ENCODE measurements at regions of chr17 and their contacts with region 1.

Region 1: DNA sequence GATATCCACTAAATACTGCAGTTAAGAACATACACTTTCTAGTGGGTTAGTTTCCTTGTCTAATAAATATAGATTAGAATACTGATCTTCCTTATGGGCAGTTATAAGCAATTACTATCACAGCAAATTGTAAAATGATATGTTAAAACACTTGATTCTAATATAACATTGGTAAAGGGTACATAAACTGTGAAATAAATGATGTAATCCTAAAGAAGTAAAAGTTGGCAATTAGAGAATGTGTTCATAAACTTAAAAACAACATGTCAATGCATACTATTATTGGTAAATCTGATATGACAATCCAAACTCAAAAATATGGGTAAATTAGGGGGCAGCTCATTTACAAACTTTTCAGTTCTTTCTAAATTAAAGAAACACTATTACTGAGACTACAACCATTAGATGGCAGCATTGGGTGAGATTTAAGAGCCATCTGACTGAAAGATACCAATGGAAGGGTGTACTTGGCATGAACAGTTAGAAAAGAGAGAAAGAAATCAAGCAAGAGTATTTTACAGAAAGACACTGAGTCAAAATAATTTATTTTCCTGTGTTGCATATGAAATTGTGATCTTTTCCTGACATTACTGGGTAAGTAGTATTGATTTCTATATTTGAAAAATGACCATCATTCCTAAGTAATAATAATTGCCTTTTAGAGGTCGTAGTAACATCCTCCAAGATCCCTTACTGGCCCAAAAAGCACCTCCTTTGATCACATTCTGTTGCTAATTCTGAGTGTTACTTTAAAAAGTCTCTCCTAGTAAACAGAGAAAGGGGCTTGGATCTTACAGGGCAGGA is 119.6 kb downstream of the SPAG9 start:
- DNase-seq: peak; percentile 27
- H3K4me3 Mint-ChIP-seq: no peak overlapping the region
- H3K27ac Mint-ChIP-seq: no peak overlapping the region
- H3K4me1 Mint-ChIP-seq: no peaks in the 10 kb centered on the region
- H3K27me3 Mint-ChIP-seq: no peaks in the 10 kb centered on the region

Region 2: GRCh38 chr17:51015145-51015558 is 14.1 kb after region 1 on chr17:
- CTCF ChIA-PET with region 1: interaction called, 11 read pairs
- DNase-seq: no peak
- H3K4me3 Mint-ChIP-seq: no peak overlapping the region
- H3K27ac Mint-ChIP-seq: no peak overlapping the region
- H3K4me1 Mint-ChIP-seq: no peaks in the 10 kb centered on the region
- H3K27me3 Mint-ChIP-seq: no peaks in the 10 kb centered on the region

Region 3: GRCh38 chr17:51056813-51057510 is 55.9 kb after region 1 on chr17:
- CTCF ChIA-PET with region 1: interaction called, 39 read pairs
- DNase-seq: peak; percentile 52
- H3K4me3 Mint-ChIP-seq: no peak overlapping the region
- H3K27ac Mint-ChIP-seq: no peak overlapping the region
- H3K4me1 Mint-ChIP-seq: no peaks in the 10 kb centered on the region
- H3K27me3 Mint-ChIP-seq: no peaks in the 10 kb centered on the region

Region 4: GRCh38 chr17:51153210-51154072 is 152.4 kb after region 1 on chr17 and contains the start of gene NME1:
- CTCF ChIA-PET with region 1: interaction called, 82 read pairs
- DNase-seq: peak; percentile 97
- H3K4me3 Mint-ChIP-seq: no peak within 1 kb of the TSS
- H3K27ac Mint-ChIP-seq: no peak within 1 kb of the TSS
- H3K4me1 Mint-ChIP-seq: peaks cover 6% of the 10 kb centered on the region
- H3K27me3 Mint-ChIP-seq: no peaks in the 10 kb centered on the region